ENCODE measurements at regions of chr1 and their contacts with region 1.

Region 1: DNA sequence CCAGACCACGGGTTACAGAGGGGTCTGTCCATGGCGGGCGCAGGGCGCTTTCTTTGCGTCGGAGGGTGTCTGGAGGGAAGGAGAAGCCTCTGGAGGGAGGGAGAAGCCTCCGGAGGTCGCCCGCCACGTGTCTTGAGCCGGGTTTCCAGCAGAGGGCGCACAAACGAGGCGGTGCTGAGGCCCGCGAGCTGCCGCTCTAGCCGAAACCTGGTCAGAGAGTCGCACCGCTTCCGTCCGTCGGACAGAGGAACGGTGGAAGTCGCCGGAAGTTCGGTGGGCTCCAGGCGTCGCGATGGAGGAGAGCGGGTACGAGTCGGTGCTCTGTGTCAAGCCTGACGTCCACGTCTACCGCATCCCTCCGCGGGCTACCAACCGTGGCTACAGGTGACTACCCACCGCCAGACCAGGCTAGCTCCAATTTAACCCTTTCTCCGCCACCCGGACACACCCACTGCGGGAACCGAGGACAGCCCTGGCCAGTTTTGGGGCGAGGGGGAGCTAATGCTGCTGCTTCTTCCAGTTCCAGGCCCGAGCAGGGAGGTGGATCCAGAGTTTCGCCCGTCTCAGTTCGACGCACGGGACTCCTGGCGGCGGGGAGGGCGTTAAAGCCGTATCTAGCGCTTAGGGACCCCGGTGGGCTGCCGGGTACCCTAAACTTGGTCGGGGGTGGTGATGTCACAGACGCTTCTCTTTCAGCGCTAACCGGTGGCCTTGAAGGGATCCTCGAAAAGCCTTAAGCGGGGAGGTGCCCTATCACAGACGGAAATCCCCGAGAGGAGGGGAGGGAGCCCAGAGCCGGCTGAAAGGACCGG is at the start of gene NECAP2:
- H3K4me3 ChIP-seq: peak within 1 kb of the TSS; percentile 89
- H3K27ac ChIP-seq: peak within 1 kb of the TSS; percentile 54; the same call in 1 of the 2 replicates
- H3K4me1 ChIP-seq: no peaks in the 10 kb centered on the region
- CTCF ChIP-seq: peak; percentile 99

Region 2: DNA sequence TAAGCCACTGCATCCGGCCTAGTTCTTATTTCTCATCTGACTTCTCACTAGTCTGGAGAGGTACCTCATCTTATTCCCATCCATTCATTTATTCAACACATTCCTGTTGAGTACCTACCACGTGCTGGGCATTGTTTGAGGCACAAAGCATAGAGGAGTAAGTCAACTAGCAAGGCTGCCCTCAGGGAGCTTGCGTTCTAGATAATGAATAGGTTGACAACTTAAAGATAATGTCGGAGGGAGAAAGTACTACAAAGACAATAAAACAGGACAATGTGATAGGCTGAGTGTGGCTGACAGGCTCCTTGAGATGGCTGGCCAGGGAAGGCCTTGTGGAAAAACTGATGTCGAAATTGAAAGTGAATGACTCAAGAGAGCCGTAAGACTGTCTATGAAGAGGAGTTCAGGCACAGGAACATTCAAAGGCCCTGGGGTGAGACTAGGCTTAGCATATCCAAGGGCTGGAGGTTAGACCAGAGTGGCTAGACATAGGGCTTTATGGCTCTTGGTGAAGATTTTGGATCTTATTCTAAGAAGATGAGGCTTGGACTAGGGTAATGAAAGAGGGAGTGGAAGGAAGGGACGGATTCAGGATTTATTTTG is 21.8 kb before region 1 on chr1:
- CTCF ChIA-PET with region 1: interaction called, 10 read pairs
- POLR2A ChIA-PET with region 1: interaction called, 3 read pairs
- H3K4me3 ChIP-seq: no peak overlapping the region
- H3K27ac ChIP-seq: no peak overlapping the region
- H3K4me1 ChIP-seq: no peaks in the 10 kb centered on the region
- CTCF ChIP-seq: no peak

Region 3: DNA sequence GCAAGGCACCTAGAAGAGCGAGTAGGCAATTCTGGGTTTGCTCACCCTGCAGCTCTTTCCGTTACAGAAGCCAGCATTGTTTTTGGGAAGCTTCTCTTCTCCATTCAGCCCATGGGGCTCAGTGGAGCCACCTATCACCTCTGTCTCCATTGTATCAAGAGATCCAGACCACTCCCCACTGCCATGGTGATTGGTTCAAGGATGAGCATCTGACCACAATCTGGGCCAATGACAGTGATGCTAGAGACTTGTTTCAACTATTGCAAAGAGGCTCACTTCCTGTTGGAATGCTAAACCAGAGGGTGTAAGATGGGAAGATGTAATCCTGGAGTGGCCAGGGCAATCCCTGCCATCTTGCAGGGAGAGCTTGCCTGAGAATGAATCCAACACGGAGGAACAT is 10.1 kb before region 1 on chr1:
- CTCF ChIA-PET with region 1: interaction called, 12 read pairs
- POLR2A ChIA-PET with region 1: interaction called, 5 read pairs
- H3K4me3 ChIP-seq: no peak overlapping the region
- H3K27ac ChIP-seq: no peak overlapping the region
- H3K4me1 ChIP-seq: no peaks in the 10 kb centered on the region
- CTCF ChIP-seq: no peak

Region 4: DNA sequence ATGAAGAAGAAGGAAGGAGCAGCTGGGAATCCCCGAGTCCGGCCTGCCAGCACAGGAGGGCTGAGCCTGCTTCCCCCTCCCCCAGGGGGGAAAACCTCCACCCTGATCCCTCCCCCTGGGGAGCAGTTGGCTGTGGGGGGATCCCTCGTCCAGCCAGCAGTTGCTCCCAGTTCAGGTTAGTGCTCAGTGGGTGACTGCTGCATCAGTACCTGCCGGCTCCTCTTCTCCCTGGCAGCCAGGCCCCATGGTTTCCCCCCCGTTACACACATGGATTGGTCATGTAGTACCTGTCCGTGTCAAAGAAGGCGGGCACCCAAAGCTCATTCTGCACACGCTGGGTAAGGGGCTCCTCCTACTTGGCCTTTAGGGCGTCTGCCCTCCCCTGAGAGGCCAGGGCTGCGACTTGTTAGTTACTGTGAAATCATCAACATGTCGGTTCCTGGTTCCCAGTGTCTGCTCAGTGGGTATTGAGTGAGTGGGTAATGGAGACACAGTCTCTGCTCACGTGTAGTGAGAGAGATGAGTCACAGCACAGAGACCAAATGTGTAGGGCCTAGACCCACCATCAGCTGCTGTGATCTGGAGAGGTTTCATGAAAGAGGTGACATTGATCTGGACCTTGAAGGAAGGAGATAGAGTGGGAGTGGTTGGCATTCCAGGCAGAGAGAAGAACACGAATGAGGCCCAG is 11.3 kb after region 1 on chr1:
- CTCF ChIA-PET with region 1: interaction called, 14 read pairs
- POLR2A ChIA-PET with region 1: interaction called, 4 read pairs
- H3K4me3 ChIP-seq: no peak overlapping the region
- H3K27ac ChIP-seq: no peak overlapping the region
- H3K4me1 ChIP-seq: no peaks in the 10 kb centered on the region
- CTCF ChIP-seq: no peak

Measured in HEK293 (cell line).